Activated CD8-positive, alpha-beta T cell treated with anti-CD3 and anti-CD28 coated beads for 36 hours (primary cell): ENCODE measurements at regions of chr13 and their contacts with region 1.

Region 1: DNA sequence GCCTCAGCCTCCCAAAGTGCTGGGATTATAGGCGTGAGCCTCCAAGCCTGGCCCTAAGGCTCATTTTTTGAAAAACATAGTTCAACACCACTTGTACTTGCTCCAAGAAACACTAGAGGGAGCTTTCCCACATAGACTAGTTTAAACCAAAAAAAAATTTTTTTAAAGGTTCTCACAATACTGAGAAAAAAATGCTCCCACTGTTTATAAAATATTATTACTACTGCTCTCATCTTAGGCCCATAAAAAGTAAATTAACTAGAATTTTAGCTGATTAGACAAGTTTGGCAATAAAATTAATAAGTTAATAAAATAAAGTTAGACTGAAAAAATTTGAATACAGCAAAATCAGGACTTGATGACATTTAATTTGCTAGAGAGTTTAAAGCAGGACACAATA is 109.5 kb downstream of the TBC1D4 start:
- DNase-seq: peak; percentile 7
- ATAC-seq: peak; percentile 90
- H3K4me3 Mint-ChIP-seq: no peak overlapping the region
- H3K27ac Mint-ChIP-seq: no peak overlapping the region
- H3K4me1 Mint-ChIP-seq: peaks cover 6% of the 10 kb centered on the region
- H3K27me3 Mint-ChIP-seq: no peaks in the 10 kb centered on the region
- CTCF ChIP-seq: peak; percentile 72

Region 2: DNA sequence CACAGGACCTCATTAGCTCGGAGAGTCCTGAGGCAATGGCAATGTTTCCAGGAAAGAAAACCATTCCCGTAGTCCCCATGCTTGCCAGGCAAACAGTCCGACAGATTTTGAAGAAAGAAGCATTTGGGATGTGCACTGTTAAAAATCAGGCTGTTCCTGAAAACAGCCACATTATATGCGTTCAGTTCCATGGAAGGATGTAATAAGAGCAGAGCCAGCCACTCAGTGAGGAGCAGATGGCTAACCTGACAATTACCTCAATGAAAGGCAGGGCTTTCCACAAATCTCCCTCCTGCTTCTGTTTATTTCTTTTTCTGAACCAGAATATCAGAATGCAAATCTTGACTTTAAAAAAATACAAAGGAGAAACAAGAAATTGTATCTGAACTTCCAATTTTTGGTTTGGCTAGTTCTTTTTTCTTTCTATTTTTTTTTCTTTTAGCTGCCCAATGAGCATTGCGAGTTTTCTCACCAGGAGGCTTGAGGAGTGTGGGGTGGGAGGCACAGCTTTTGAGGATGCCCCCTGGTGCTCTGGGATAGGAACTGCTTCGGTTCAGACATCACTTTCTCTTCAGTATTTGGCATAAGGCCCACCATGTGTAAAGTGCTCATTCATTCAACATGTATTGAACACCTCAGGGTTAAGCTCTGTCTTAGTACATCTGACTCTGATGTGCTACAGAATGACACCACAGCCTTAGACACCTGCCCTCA is 14.8 kb before region 1 on chr13:
- CTCF ChIA-PET with region 1: interaction called, 14 read pairs
- POLR2A ChIA-PET with region 1: interaction called, 3 read pairs
- intact Hi-C with region 1: no loop called
- DNase-seq: peak; percentile 69
- ATAC-seq: peak; percentile 95
- H3K4me3 Mint-ChIP-seq: no peak overlapping the region
- H3K27ac Mint-ChIP-seq: no peak overlapping the region
- H3K4me1 Mint-ChIP-seq: peaks cover 30% of the 10 kb centered on the region
- H3K27me3 Mint-ChIP-seq: no peaks in the 10 kb centered on the region
- CTCF ChIP-seq: peak; percentile 79

Region 3: DNA sequence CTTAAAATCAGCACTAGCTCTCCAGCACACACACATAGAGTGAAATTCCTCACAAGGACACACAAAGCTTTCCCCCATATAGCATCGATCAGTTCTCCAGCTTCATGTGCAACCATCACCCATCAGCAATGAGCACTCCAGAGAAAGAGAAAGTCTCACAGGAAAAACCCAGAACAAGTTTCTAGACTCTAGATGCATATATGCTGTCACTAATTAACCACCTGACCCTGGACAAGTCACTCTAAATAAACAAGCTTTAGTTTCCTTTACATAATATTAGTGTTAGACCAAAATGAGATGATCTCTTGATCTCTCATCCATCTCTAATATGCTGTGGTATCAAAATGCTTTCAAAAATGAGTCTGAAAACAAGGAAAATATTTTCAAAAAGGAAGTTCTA is 28.3 kb after region 1 on chr13:
- CTCF ChIA-PET with region 1: interaction called, 12 read pairs
- POLR2A ChIA-PET with region 1: no interaction called
- intact Hi-C with region 1: no loop called
- DNase-seq: no peak
- ATAC-seq: no peak
- H3K4me3 Mint-ChIP-seq: no peak overlapping the region
- H3K27ac Mint-ChIP-seq: no peak overlapping the region
- H3K4me1 Mint-ChIP-seq: no peaks in the 10 kb centered on the region
- H3K27me3 Mint-ChIP-seq: peaks cover 10% of the 10 kb centered on the region
- CTCF ChIP-seq: no peak

Region 4: GRCh38 chr13:75469047-75469446 is 96.5 kb after region 1 on chr13:
- CTCF ChIA-PET with region 1: no interaction called
- POLR2A ChIA-PET with region 1: no interaction called
- intact Hi-C with region 1: no loop called
- DNase-seq: no peak
- ATAC-seq: no peak
- H3K4me3 Mint-ChIP-seq: no peak overlapping the region
- H3K27ac Mint-ChIP-seq: no peak overlapping the region
- H3K4me1 Mint-ChIP-seq: no peaks in the 10 kb centered on the region
- H3K27me3 Mint-ChIP-seq: peaks cover 23% of the 10 kb centered on the region
- CTCF ChIP-seq: no peak

Region 5: GRCh38 chr13:75482070-75482819 is 109.7 kb after region 1 on chr13 and contains the start of gene TBC1D4:
- CTCF ChIA-PET with region 1: interaction called, 14 read pairs
- POLR2A ChIA-PET with region 1: interaction called, 3 read pairs
- intact Hi-C with region 1: loop called (anchors 5 kb)
- DNase-seq: peak; percentile 79
- ATAC-seq: peak; percentile 81
- H3K4me3 Mint-ChIP-seq: peak within 1 kb of the TSS; percentile 91
- H3K27ac Mint-ChIP-seq: peak within 1 kb of the TSS; percentile 28
- H3K4me1 Mint-ChIP-seq: peaks cover 19% of the 10 kb centered on the region
- H3K27me3 Mint-ChIP-seq: peaks cover 50% of the 10 kb centered on the region
- CTCF ChIP-seq: peak; percentile 75
- total RNA-seq, gene TBC1D4: 50.4 to 53.3 TPM

Region 6: GRCh38 chr13:75549262-75550158 is 177.0 kb after region 1 on chr13 and contains the start of gene UCHL3:
- CTCF ChIA-PET with region 1: interaction called, 10 read pairs
- POLR2A ChIA-PET with region 1: no interaction called
- intact Hi-C with region 1: loop called (anchors 10 kb)
- DNase-seq: peak; percentile 98
- ATAC-seq: peak; percentile 96
- H3K4me3 Mint-ChIP-seq: peak within 1 kb of the TSS; percentile 92
- H3K27ac Mint-ChIP-seq: peak within 1 kb of the TSS; percentile 97
- H3K4me1 Mint-ChIP-seq: peaks cover 41% of the 10 kb centered on the region
- H3K27me3 Mint-ChIP-seq: no peaks in the 10 kb centered on the region
- CTCF ChIP-seq: peak; percentile 90
- total RNA-seq, gene UCHL3: 32.9 to 36.4 TPM